Activated CD4-positive, alpha-beta T cell treated with anti-CD3 and anti-CD28 coated beads for 36 hours (primary cell): ENCODE measurements at regions of chr20 and their contacts with region 1.

Region 1: GRCh38 chr20:58888521-58889333 is 36.2 kb downstream of the GNAS start:
- DNase-seq: peak; percentile 91
- ATAC-seq: peak; percentile 58
- H3K4me3 Mint-ChIP-seq: peak overlapping the region; percentile 88
- H3K27ac Mint-ChIP-seq: peak overlapping the region; percentile 47
- H3K4me1 Mint-ChIP-seq: peaks cover 29% of the 10 kb centered on the region
- H3K27me3 Mint-ChIP-seq: no peaks in the 10 kb centered on the region

Region 2: GRCh38 chr20:57391074-57391554 is 1497.6 kb before region 1 on chr20 and contains the start of gene RBM38:
- CTCF ChIA-PET with region 1: no interaction called
- POLR2A ChIA-PET with region 1: no interaction called
- intact Hi-C with region 1: loop called (anchors 5 to 10 kb)
- DNase-seq: peak; percentile 91
- ATAC-seq: peak; percentile 60
- H3K4me3 Mint-ChIP-seq: peak within 1 kb of the TSS; percentile 83
- H3K27ac Mint-ChIP-seq: peak within 1 kb of the TSS; percentile 97
- H3K4me1 Mint-ChIP-seq: peaks cover 44% of the 10 kb centered on the region
- H3K27me3 Mint-ChIP-seq: no peaks in the 10 kb centered on the region
- total RNA-seq, gene RBM38: 96.5 to 101 TPM

Region 3: DNA sequence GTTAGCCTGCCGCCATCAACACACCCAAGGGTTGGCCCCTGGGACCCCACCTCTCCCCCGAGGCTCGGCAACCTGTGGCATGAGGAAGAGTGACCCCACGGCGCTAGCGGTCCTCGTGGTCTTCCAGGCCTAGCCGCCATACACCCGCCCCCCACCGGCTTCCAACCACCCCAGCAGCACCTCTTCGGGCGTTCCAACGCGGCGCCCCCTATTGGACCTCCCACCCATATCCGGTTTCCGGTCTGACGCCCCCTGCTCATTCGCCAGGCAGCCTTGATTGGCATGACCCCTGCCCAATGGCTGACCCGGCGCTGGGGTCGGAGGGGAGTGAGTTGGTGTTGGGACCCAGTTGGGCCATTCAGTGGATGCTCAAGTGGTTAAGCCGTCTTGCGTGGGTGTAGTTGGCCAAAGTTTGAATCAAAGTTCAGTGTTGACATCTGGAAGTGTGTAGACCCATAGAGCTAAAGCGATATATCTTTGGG is 38.0 kb before region 1 on chr20 and contains the start of gene GNAS-AS1:
- CTCF ChIA-PET with region 1: no interaction called
- POLR2A ChIA-PET with region 1: no interaction called
- intact Hi-C with region 1: loop called in 1 of 2 experiments (anchors 1 kb)
- DNase-seq: peak; percentile 91
- ATAC-seq: peak; percentile 91
- H3K4me3 Mint-ChIP-seq: peak within 1 kb of the TSS; percentile 77
- H3K27ac Mint-ChIP-seq: peak within 1 kb of the TSS; percentile 59
- H3K4me1 Mint-ChIP-seq: peaks cover 27% of the 10 kb centered on the region
- H3K27me3 Mint-ChIP-seq: peaks cover 41% of the 10 kb centered on the region
- total RNA-seq, gene GNAS-AS1: 1.1 to 1.9 TPM

Region 4: GRCh38 chr20:59032023-59032712 is 143.4 kb after region 1 on chr20 and contains the start of gene ATP5F1E:
- CTCF ChIA-PET with region 1: no interaction called
- POLR2A ChIA-PET with region 1: interaction called, 5 read pairs
- intact Hi-C with region 1: loop called (anchors 1 to 2 kb)
- DNase-seq: peak; percentile 98
- ATAC-seq: peak; percentile 95
- H3K4me3 Mint-ChIP-seq: peak within 1 kb of the TSS; percentile 87
- H3K27ac Mint-ChIP-seq: peak within 1 kb of the TSS; percentile 96
- H3K4me1 Mint-ChIP-seq: peaks cover 73% of the 10 kb centered on the region
- H3K27me3 Mint-ChIP-seq: no peaks in the 10 kb centered on the region
- total RNA-seq, gene ATP5F1E: 63.5 to 76.1 TPM

Region 5: GRCh38 chr20:59149651-59150504 is 261.2 kb after region 1 on chr20:
- CTCF ChIA-PET with region 1: no interaction called
- POLR2A ChIA-PET with region 1: no interaction called
- intact Hi-C with region 1: loop called (anchors 5 kb)
- DNase-seq: peak; percentile 82
- ATAC-seq: peak; percentile 42
- H3K4me3 Mint-ChIP-seq: peak overlapping the region; percentile 58
- H3K27ac Mint-ChIP-seq: peak overlapping the region; percentile 95
- H3K4me1 Mint-ChIP-seq: peaks cover 96% of the 10 kb centered on the region
- H3K27me3 Mint-ChIP-seq: no peaks in the 10 kb centered on the region

Region 6: GRCh38 chr20:59222253-59223181 is 333.8 kb after region 1 on chr20:
- CTCF ChIA-PET with region 1: no interaction called
- POLR2A ChIA-PET with region 1: no interaction called
- intact Hi-C with region 1: loop called in 1 of 2 experiments (anchors 5 kb)
- DNase-seq: peak; percentile 91
- ATAC-seq: peak; percentile 95
- H3K4me3 Mint-ChIP-seq: peak overlapping the region; percentile 65
- H3K27ac Mint-ChIP-seq: peak overlapping the region; percentile 81
- H3K4me1 Mint-ChIP-seq: peaks cover 31% of the 10 kb centered on the region
- H3K27me3 Mint-ChIP-seq: no peaks in the 10 kb centered on the region